Left ventricle myocardium superior (tissue), 1 donor: ENCODE measurements at regions of chr18 and their contacts with region 1.

Region 1: DNA sequence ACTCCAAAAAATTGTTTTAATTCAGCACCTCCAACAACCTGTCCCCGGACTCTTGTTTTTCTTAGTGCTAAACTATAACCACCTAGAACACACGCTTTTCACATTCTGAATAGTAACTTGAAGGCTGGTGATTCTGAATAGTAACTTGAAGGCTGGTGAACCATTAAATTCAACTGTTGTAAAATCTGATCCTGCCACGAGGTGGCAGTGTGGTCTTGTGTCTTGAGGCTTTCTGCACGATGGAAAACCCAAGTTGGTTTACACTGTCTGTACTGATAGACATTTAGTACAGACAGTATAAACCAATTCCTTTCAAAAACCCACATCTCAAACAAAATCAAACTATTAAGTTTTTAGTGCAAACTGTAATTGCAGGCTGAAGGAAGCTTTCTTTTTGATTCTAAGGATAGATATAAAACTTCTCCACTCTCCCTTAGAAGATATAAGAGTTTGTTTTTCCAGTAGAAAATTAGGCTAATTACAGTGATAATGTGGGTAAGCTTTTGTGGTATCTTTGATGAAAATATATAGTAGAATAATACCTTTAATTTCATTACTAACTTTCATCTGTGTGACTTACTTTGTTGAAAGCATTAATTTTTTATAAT is 57.6 kb downstream of the VAPA start:
- DNase-seq: peak; percentile 51
- ATAC-seq: peak; percentile 73

Region 2: DNA sequence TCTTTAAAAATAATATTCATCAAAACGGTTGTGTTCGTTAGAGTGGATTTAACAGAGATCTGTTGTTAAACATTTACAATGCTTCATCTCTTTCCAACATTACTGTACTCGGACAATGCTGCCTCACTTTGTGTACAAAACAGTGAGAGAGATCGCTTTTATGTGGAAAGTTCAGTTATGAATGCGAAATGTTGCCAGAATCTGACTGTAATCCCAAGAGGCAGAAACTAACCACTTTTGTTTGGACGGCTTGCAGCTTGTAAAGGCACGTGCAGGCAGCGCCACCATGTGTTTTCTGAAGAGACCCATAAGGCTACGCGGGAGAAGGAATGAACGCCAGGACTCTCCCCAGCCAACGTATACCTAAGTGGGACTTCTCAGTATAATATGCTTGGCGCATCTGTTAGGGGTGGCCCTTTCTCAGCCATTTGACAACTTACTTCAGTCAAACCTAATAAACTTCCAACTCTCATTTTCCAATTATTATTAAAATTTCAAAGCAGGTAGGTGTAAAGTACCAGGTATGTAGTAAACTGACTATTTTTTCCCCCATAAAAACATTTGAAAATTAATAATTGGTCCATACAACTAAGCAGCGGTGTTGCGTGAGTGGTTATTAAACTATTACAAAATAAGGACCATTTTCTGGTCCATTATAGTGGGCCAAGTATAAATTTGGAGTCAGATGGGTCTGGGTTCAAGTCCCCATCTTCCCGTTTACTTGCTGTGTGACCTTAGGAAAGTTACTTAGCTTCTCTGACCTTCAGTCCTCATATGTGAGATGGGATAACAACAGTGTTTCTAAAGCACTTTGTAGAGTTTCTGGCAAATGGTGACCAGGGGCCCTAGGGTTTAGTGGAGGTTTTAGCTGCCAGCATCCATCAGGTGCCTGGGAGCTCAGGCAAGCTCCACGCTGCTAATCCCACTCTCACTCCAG is 548.9 kb after region 1 on chr18:
- intact Hi-C with region 1: loop called (anchors 2 kb)
- DNase-seq: peak; percentile 86
- ATAC-seq: peak; percentile 86